PC-9 (cell line): ENCODE measurements at regions of chr4 and their contacts with region 1.

Region 1: GRCh38 chr4:150268444-150268843 is 190.2 kb downstream of the DCLK2 start:
- DNase-seq: no peak
- H3K4me3 ChIP-seq: no peak overlapping the region
- H3K27ac ChIP-seq: no peak overlapping the region
- H3K4me1 ChIP-seq: no peaks in the 10 kb centered on the region
- H3K27me3 ChIP-seq: no peaks in the 10 kb centered on the region
- CTCF ChIP-seq: no peak

Region 2: GRCh38 chr4:150140774-150141400 is 127.6 kb before region 1 on chr4:
- CTCF ChIA-PET with region 1: no interaction called
- POLR2A ChIA-PET with region 1: interaction called, 19 read pairs
- intact Hi-C with region 1: no loop called
- DNase-seq: peak in 1 of 2 experiments; percentile 63
- H3K4me3 ChIP-seq: no peak overlapping the region
- H3K27ac ChIP-seq: peak overlapping the region; percentile 49
- H3K4me1 ChIP-seq: peaks cover 14% of the 10 kb centered on the region
- H3K27me3 ChIP-seq: no peaks in the 10 kb centered on the region
- CTCF ChIP-seq: no peak

Region 3: DNA sequence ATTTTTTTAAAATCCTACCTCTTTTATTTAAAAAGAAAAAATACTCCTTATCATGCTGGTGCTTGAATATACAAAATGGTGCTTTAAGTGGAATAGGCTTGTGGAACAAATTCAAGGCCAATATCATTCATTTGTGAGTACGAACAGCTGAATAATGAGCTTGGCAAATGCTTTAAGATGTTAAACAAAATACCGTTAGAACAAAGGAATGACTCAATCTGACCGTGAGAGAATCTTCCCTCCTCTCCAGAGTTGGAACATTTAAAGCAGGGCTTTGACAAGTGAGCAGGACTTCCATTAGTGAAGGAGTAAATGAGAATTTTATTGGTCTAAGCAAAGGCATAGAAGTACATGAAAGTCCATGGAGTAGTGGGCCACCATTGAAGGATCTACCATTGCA is 115.7 kb before region 1 on chr4:
- CTCF ChIA-PET with region 1: no interaction called
- POLR2A ChIA-PET with region 1: no interaction called
- intact Hi-C with region 1: no loop called
- DNase-seq: no peak
- H3K4me3 ChIP-seq: no peak overlapping the region
- H3K27ac ChIP-seq: no peak overlapping the region
- H3K4me1 ChIP-seq: no peaks in the 10 kb centered on the region
- H3K27me3 ChIP-seq: no peaks in the 10 kb centered on the region
- CTCF ChIP-seq: no peak

Region 4: DNA sequence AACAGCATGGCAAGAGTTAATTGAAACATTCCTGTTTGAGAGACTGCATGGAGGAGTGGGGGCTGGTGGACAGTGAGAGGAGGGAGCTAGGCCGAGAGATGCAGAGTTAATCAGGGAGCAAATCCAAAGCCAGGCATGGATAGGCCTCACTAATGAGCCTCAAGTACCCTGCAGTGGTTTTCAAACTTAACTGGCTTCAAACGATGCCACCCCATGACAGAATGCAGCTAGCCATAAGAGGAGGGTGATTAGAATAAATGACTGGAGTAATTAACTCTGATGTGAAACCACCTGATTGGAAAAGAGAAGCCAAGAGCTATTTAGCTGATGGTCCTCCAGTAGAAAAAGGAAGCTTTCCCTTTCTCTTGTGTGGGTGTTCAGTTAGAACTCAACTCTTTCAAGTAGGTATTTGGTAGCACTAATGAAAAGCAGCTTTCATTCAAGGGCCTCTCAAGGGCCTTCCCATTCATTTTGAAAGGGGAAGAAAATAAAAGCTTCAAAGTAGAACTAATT is 98.1 kb after region 1 on chr4:
- CTCF ChIA-PET with region 1: no interaction called
- POLR2A ChIA-PET with region 1: no interaction called
- intact Hi-C with region 1: no loop called
- DNase-seq: no peak
- H3K4me3 ChIP-seq: no peak overlapping the region
- H3K27ac ChIP-seq: no peak overlapping the region
- H3K4me1 ChIP-seq: no peaks in the 10 kb centered on the region
- H3K27me3 ChIP-seq: no peaks in the 10 kb centered on the region
- CTCF ChIP-seq: no peak